CD4-positive, alpha-beta memory T cell (primary cell): ENCODE measurements at regions of chr12 and their contacts with region 1.

Region 1: GRCh38 chr12:3885277-3886094 is 12.3 kb upstream of the PARP11 start:
- DNase-seq: peak; percentile 55 to 73 (median 70)
- H3K4me3 ChIP-seq: no peak overlapping the region
- H3K4me3 Mint-ChIP-seq: peak overlapping the region in 3 of 8 donors; percentile 19 to 25 (median 22)
- H3K27ac ChIP-seq: no peak overlapping the region
- H3K27ac Mint-ChIP-seq: peak overlapping the region; percentile 2 to 90 (median 53)
- H3K4me1 ChIP-seq: peaks cover 9% of the 10 kb centered on the region
- H3K4me1 Mint-ChIP-seq: peaks cover 12 to 25% (median 13%) of the 10 kb centered on the region in 4 donors
- H3K27me3 ChIP-seq: no peaks in the 10 kb centered on the region
- H3K27me3 Mint-ChIP-seq: peaks cover 5 to 7% of the 10 kb centered on the region in 2 donors

Region 2: DNA sequence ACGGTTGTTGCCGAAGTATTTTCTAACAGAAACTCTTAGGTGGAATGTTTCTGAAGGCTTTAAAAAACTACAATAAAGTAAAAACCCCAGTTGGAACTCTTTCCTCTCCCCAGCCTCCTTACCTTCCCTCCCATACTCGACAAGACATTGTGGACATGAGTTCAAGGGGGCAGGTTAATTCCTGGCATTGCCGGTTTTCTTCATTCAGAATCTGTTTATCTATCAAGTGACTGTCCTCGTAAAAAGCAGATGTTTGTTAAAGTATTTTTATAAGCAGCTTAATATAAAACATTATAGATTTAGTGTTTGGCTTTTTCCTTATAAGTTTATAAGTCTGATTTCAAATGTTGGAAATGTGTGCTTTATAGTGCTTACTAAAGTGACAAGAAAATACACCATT is 43.0 kb before region 1 on chr12:
- CTCF ChIA-PET with region 1: no interaction called
- POLR2A ChIA-PET with region 1: no interaction called
- intact Hi-C with region 1: no loop called
- DNase-seq: no peak
- H3K4me3 ChIP-seq: no peak overlapping the region
- H3K4me3 Mint-ChIP-seq: no peak overlapping the region
- H3K27ac ChIP-seq: no peak overlapping the region
- H3K27ac Mint-ChIP-seq: no peak overlapping the region
- H3K4me1 ChIP-seq: peaks cover 4% of the 10 kb centered on the region
- H3K4me1 Mint-ChIP-seq: peaks cover 30 to 74% (median 39%) of the 10 kb centered on the region in 4 donors
- H3K27me3 ChIP-seq: no peaks in the 10 kb centered on the region
- H3K27me3 Mint-ChIP-seq: no peaks in the 10 kb centered on the region

Region 3: GRCh38 chr12:3896801-3897331 is 11.4 kb after region 1 on chr12:
- CTCF ChIA-PET with region 1: interaction called, 45 read pairs
- POLR2A ChIA-PET with region 1: interaction called, 51 read pairs
- intact Hi-C with region 1: loop called (anchors 1 kb)
- DNase-seq: no peak
- H3K4me3 ChIP-seq: peak overlapping the region in 1 of 2 donors; percentile 17
- H3K4me3 Mint-ChIP-seq: peak overlapping the region; percentile 61 to 88 (median 81)
- H3K27ac ChIP-seq: peak overlapping the region; percentile 61
- H3K27ac Mint-ChIP-seq: peak overlapping the region in 5 of 7 donors; percentile 95 to 99 (median 97)
- H3K4me1 ChIP-seq: peaks cover 95% of the 10 kb centered on the region
- H3K4me1 Mint-ChIP-seq: peaks cover 0 to 40% (median 19%) of the 10 kb centered on the region in 4 donors
- H3K27me3 ChIP-seq: no peaks in the 10 kb centered on the region
- H3K27me3 Mint-ChIP-seq: no peaks in the 10 kb centered on the region

Region 4: GRCh38 chr12:3928540-3929184 is 43.2 kb after region 1 on chr12:
- CTCF ChIA-PET with region 1: interaction called, 27 read pairs
- POLR2A ChIA-PET with region 1: interaction called, 8 read pairs
- intact Hi-C with region 1: no loop called
- DNase-seq: no peak
- H3K4me3 ChIP-seq: no peak overlapping the region
- H3K4me3 Mint-ChIP-seq: no peak overlapping the region
- H3K27ac ChIP-seq: no peak overlapping the region
- H3K27ac Mint-ChIP-seq: peak overlapping the region in 5 of 7 donors; percentile 19 to 84 (median 64)
- H3K4me1 ChIP-seq: peaks cover 41% of the 10 kb centered on the region
- H3K4me1 Mint-ChIP-seq: peaks cover 34 to 70% (median 56%) of the 10 kb centered on the region in 4 donors
- H3K27me3 ChIP-seq: no peaks in the 10 kb centered on the region
- H3K27me3 Mint-ChIP-seq: no peaks in the 10 kb centered on the region

Region 5: GRCh38 chr12:3973978-3974644 is 88.6 kb after region 1 on chr12:
- CTCF ChIA-PET with region 1: interaction called, 25 read pairs
- POLR2A ChIA-PET with region 1: interaction called, 10 read pairs
- intact Hi-C with region 1: no loop called
- DNase-seq: peak in 3 of 5 donors; percentile 20 to 46 (median 21)
- H3K4me3 ChIP-seq: peak overlapping the region in 1 of 2 donors; percentile 8
- H3K4me3 Mint-ChIP-seq: peak overlapping the region; percentile 5 to 83 (median 74)
- H3K27ac ChIP-seq: peak overlapping the region; percentile 43
- H3K27ac Mint-ChIP-seq: peak overlapping the region; percentile 75 to 93 (median 90)
- H3K4me1 ChIP-seq: peaks cover 57% of the 10 kb centered on the region
- H3K4me1 Mint-ChIP-seq: peaks cover 39 to 64% (median 51%) of the 10 kb centered on the region in 4 donors
- H3K27me3 ChIP-seq: no peaks in the 10 kb centered on the region
- H3K27me3 Mint-ChIP-seq: no peaks in the 10 kb centered on the region

Region 6: GRCh38 chr12:4006743-4007142 is 121.3 kb after region 1 on chr12:
- CTCF ChIA-PET with region 1: interaction called, 53 read pairs
- POLR2A ChIA-PET with region 1: interaction called, 3 read pairs
- intact Hi-C with region 1: no loop called
- DNase-seq: no peak
- H3K4me3 ChIP-seq: no peak overlapping the region
- H3K4me3 Mint-ChIP-seq: no peak overlapping the region
- H3K27ac ChIP-seq: no peak overlapping the region
- H3K27ac Mint-ChIP-seq: no peak overlapping the region
- H3K4me1 ChIP-seq: no peaks in the 10 kb centered on the region
- H3K4me1 Mint-ChIP-seq: no peaks in the 10 kb centered on the region
- H3K27me3 ChIP-seq: no peaks in the 10 kb centered on the region
- H3K27me3 Mint-ChIP-seq: no peaks in the 10 kb centered on the region

Region 7: DNA sequence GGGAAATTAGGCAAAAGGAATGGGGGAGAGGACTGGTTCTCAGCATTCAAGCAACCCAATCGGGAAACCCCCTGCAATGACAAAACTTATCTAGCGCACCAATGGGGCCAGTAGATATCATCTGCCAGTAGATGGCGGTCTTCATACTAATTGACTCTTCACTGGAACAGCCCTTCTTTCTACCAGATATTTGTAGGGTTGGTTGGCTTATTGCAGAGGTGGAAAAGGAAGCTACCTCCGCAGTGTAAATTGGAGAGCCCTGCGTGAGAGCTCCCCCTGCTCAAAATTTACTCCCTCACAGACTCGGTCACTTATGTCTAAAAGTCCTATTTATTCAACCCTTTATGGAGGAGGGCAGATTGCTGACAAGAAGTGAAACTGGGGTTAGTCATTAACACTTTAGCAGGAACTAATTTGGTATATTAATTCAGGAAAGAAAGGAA is 222.0 kb after region 1 on chr12:
- CTCF ChIA-PET with region 1: interaction called, 27 read pairs
- POLR2A ChIA-PET with region 1: no interaction called
- intact Hi-C with region 1: loop called (anchors 1 kb)
- DNase-seq: peak; percentile 78 to 87 (median 83)
- H3K4me3 ChIP-seq: no peak overlapping the region
- H3K4me3 Mint-ChIP-seq: peak overlapping the region in 7 of 8 donors; percentile 26 to 67 (median 47)
- H3K27ac ChIP-seq: no peak overlapping the region
- H3K27ac Mint-ChIP-seq: peak overlapping the region in 6 of 7 donors; percentile 80 to 94 (median 92)
- H3K4me1 ChIP-seq: peaks cover 10% of the 10 kb centered on the region
- H3K4me1 Mint-ChIP-seq: peaks cover 8 to 15% (median 11%) of the 10 kb centered on the region in 4 donors
- H3K27me3 ChIP-seq: no peaks in the 10 kb centered on the region
- H3K27me3 Mint-ChIP-seq: peaks cover 0 to 2% of the 10 kb centered on the region in 2 donors